ENCODE measurements at regions of chr18 and their contacts with region 1.

Region 1: DNA sequence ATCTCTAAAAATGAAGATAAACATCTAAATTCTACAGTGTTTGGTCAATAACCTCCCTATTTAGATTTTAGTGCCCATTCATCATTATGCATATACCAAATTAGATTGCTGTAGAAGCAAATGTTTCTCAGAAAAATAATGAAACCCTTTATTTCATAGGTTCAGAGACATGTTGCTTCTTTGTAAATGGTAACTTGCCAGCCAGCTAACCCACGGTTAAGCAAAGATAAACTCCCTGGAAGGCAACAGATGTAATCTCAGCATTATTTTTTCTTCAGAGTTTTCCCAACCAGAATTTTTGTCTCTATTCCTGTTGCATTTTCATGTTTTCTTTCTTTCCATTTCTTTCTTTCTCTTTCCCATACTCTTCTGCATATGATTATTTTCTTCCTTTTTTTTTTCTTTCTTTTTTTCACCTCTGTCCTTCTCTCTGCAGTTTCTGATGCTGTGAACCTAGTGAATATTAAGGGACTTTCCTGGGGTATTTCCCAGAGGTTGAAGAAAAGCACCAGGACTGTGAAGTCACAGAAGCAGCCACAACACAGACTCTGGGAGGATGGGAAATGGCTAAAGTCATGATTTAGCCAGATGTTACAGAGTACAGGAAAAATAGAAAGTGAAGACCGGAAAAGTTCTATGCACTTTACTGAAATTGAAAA is 50.0 kb upstream of the DSG1 start:
- DNase-seq: no peak
- ATAC-seq: no peak

Region 2: DNA sequence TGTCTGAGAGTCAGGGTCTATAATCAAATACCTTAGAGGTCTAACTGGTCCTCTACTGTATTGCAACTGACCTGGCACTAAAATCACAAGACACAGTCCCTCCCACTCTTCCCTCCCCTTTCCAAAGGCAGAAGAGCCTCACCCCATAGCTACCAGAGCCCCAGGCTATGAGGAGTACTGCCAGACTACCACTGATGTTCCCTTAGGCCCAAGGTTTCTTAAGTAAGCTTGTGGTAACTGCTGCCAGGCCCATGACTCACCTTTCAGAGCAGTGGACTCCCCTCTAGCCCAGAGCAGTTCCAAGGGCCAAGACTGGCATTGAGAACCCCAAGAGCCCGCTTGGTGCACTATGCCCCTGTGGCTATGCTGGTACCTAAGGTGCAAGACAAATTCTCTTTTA is 1418.8 kb before region 1 on chr18:
- intact Hi-C with region 1: no loop called
- DNase-seq: no peak
- ATAC-seq: no peak

Region 3: GRCh38 chr18:31225668-31226067 is 42.3 kb before region 1 on chr18:
- intact Hi-C with region 1: no loop called
- DNase-seq: no peak
- ATAC-seq: peak; percentile 72

Region 4: GRCh38 chr18:31301201-31301655 is 33.3 kb after region 1 on chr18:
- intact Hi-C with region 1: loop called (anchors 2 kb)
- DNase-seq: no peak
- ATAC-seq: peak; percentile 73

Region 5: DNA sequence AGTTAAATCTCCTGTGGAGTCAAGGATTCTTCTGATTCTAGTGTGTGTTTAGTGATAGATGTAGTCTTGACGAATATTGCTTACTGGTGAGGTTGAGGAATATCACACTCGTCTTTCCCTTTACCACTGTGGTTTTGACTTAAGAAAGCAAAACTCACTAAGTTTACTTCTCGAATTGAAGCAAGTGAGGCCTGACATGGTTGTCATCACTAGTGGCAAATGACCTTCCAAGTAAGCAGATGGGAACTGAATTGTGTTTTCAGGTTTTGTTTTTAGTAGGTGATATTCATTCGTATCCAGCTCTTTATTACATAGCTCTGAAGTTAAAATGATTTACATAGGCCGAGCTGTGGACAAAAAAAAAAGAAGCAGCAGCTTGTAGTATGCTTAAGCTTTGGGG is 88.1 kb after region 1 on chr18:
- intact Hi-C with region 1: no loop called
- DNase-seq: no peak
- ATAC-seq: no peak

Measured in sciatic nerve (tissue), 2 donors.